ENCODE measurements at regions of chr17 and their contacts with region 1.

Region 1: DNA sequence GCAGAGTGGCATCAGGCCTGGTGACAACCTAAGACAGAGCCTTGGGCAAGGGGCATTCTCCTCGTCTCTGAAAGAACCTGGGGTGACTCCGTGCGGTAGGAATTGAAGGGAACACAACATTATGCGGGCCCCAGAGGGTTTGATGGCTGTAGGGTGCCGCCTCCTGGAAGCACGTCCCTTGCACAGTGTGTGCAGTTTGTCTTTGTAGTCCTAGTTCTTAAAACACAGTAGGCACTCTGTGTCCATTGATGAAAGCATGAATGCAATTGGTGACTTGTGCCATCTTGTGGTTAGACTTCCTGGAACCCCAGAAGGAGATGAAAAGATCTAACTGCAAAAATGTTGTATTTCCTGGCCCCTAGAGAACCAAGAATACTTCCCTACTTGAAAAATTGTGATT is 279.8 kb downstream of the UTP18 start:
- DNase-seq: peak; percentile 15
- ATAC-seq: peak; percentile 41; the same call in 2 of the 3 replicates
- H3K4me3 ChIP-seq: no peak overlapping the region
- H3K27ac ChIP-seq: no peak overlapping the region
- H3K4me1 ChIP-seq: no peaks in the 10 kb centered on the region
- H3K27me3 ChIP-seq: no peaks in the 10 kb centered on the region
- CTCF ChIP-seq: peak; percentile 44
- EP300 ChIP-seq: no peak
- POLR2A ChIP-seq: no peak
- RAD21 ChIP-seq: no peak

Region 2: DNA sequence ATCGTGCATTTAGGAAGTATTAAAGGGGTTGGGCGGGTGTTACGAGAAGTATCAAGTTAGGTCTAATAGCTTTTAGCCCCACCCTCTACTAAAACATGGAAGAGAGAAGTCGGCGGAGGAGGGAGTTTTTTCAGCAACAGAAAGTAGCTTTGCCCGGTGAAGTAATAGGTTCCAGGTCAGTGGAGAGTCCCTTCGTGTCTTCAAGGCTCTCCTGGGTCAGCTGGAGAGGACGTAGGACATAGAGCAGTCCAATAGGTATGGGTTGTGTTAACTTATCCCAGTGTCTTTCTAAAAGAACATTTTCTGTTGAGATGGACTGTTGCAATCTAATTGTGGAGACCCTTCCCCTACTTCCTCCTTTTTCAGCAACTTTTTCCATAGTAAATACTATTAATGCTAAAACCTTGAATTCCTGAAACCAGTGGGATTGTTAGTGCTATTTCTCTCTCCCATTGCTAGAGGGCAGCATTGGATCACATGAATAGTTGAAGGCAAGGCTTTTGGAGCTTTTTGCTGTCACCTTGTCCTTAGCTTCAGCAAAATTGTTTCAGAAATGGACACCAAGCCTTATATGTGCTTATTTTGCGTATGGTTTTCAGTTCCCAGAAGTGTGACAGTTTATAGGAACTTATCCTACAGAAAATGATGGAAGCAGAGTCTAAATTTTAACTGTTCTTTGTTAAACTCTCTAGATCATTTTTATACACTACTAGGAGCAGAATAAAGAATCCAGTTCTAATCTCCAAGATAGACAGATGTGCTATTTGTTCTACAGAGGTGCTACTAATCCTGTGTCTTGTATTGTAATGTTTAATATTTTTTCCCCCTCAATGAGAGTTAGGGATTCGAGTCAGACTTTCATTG is 241.4 kb before region 1 on chr17:
- CTCF ChIA-PET with region 1: interaction called, 4 read pairs
- POLR2A ChIA-PET with region 1: no interaction called
- in situ Hi-C with region 1: no loop called
- intact Hi-C with region 1: loop called (anchors 2 kb)
- DNase-seq: peak; percentile 76
- ATAC-seq: peak; percentile 81
- H3K4me3 ChIP-seq: no peak overlapping the region
- H3K27ac ChIP-seq: no peak overlapping the region
- H3K4me1 ChIP-seq: no peaks in the 10 kb centered on the region
- H3K27me3 ChIP-seq: no peaks in the 10 kb centered on the region
- CTCF ChIP-seq: peak; percentile 84
- EP300 ChIP-seq: no peak
- POLR2A ChIP-seq: no peak
- RAD21 ChIP-seq: peak; percentile 52; the same call in 1 of the 2 replicates

Region 3: GRCh38 chr17:51397361-51398127 is 142.6 kb before region 1 on chr17:
- CTCF ChIA-PET with region 1: no interaction called
- POLR2A ChIA-PET with region 1: no interaction called
- in situ Hi-C with region 1: loop called (anchors 25 kb)
- intact Hi-C with region 1: no loop called
- DNase-seq: no peak
- ATAC-seq: no peak
- H3K4me3 ChIP-seq: no peak overlapping the region
- H3K27ac ChIP-seq: no peak overlapping the region
- H3K4me1 ChIP-seq: no peaks in the 10 kb centered on the region
- H3K27me3 ChIP-seq: peaks cover 3 to 27% of the 10 kb centered on the region in 2 experiments; a peak in 3 of 5 replicates
- CTCF ChIP-seq: no peak
- EP300 ChIP-seq: no peak
- POLR2A ChIP-seq: no peak
- RAD21 ChIP-seq: no peak

Region 4: DNA sequence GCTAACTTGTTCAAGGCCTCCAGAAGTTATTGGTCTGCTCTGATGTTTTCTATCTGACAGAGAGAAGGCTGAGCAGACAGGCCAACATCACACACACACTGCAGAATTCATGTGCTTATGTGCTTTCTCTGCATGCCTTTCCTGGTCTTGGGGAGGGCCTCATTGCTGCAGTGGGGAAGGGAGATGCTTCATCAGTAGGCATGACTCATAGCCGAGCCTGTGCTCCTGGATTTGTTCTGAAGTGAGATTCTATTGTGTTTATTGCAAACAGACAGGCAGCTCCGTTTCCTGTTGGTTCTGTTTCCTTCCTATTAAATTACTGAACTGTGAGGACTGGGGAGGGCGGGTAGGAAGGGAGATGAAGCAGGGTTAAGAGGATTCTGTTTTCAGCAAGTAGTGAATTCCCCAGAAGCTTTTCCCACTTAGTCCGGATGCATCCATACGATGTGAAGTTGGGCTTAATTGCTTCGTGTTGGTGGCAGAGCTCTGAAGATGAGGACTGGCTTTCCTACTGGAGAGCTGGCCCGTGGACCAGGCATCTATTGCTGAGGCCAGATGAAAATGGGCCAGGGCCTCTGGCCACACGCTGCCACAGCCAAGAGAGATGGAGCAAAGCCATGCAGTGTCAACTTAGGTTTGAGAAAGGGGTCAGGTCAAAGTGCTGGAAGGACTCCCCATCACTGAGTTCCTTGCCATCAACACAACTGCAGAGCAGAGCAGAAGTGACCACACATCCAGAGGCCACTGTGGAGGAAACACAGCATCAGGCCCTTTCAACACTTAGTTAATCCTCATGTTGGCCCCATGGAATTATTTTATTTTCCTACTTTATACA is 100.5 kb before region 1 on chr17:
- CTCF ChIA-PET with region 1: no interaction called
- POLR2A ChIA-PET with region 1: no interaction called
- in situ Hi-C with region 1: no loop called
- intact Hi-C with region 1: no loop called
- DNase-seq: no peak
- ATAC-seq: no peak
- H3K4me3 ChIP-seq: no peak overlapping the region
- H3K27ac ChIP-seq: no peak overlapping the region
- H3K4me1 ChIP-seq: 0 out of 2 replicates have a peak, but pooled peaks cover 4% of the 10 kb centered on the region
- H3K27me3 ChIP-seq: no peaks in the 10 kb centered on the region
- CTCF ChIP-seq: no peak
- EP300 ChIP-seq: no peak
- POLR2A ChIP-seq: no peak
- RAD21 ChIP-seq: no peak

Region 5: DNA sequence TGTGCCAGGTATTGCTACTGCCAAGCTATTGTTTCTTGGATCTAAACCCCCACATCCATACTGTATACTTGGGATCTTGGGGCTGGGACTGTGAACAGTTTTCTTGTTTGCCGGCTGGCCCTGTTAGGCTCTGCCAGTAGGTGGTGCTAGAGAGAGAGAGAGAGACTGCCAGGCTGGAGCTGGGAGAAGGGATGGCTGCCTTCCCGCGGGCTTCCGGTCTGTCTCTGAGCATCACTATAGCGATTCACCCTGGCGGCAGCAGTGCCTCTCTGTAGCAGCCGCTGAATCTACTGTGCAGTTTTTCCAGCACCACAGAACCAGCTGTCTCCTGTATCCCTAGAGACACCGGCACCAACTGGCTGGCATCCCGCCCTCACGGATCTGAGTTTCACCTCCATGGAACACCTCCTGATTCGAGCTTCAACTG is 78.6 kb before region 1 on chr17:
- CTCF ChIA-PET with region 1: interaction called, 5 read pairs
- POLR2A ChIA-PET with region 1: no interaction called
- in situ Hi-C with region 1: no loop called
- intact Hi-C with region 1: loop called (anchors 2 kb)
- DNase-seq: peak; percentile 65
- ATAC-seq: peak; percentile 99
- H3K4me3 ChIP-seq: no peak overlapping the region
- H3K27ac ChIP-seq: no peak overlapping the region
- H3K4me1 ChIP-seq: no peaks in the 10 kb centered on the region
- H3K27me3 ChIP-seq: peaks cover 1 to 7% of the 10 kb centered on the region in 2 experiments; a peak in 1 of 5 replicates
- CTCF ChIP-seq: peak; percentile 86
- EP300 ChIP-seq: no peak
- POLR2A ChIP-seq: no peak
- RAD21 ChIP-seq: peak; percentile 55; the same call in 1 of the 2 replicates